ENCODE measurements at regions of chr18 and their contacts with region 1.

Region 1: DNA sequence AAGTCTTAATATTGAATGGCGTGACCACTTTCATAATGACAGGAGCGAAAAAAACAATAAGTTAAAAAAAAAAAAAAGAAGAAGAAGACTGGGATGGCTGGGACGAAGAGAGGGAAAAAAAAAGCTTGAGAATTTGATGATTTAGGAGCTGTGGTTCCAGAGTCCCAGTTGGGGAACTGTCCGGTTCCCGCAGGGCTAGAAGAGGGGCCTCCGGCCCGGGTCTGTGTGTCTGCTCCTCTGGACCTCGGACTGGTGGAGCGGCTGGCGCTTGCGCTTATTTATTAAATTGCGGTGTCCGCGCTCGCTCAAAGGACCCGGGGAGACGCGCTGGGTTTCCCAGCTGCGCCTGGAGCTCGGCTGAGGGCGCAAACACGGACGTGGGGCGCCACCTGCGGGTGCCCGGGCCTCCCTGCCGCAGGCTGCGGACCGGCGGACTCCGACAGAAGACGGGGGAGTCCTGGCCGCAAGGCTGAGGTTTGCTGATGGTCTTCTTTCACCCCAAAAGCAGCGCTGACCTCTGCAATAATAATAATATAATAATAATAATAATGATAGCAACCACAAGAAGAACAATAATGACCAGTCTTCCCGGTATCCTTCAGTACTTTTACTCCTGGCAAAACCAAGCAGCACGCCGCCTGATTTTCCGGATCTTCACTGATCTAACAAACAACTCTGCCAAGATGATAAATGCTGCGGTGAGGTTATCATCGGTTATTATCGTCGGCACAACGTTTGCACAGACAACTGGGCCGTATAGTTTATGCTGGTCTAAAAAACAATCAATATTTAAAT is at the start of gene CBLN2:
- DNase-seq: peak; percentile 64
- H3K4me3 ChIP-seq: peak within 1 kb of the TSS; percentile 24 to 58 (median 46)
- H3K27ac ChIP-seq: no peak within 1 kb of the TSS
- H3K4me1 ChIP-seq: peaks cover 16% of the 10 kb centered on the region
- H3K27me3 ChIP-seq: peaks cover 24 to 51% of the 10 kb centered on the region in 2 experiments
- CTCF ChIP-seq: peak; percentile 74 to 95
- POLR2A ChIP-seq: no peak
- total RNA-seq, gene CBLN2: 0.55 and 1.1 TPM in 2 replicates

Region 2: DNA sequence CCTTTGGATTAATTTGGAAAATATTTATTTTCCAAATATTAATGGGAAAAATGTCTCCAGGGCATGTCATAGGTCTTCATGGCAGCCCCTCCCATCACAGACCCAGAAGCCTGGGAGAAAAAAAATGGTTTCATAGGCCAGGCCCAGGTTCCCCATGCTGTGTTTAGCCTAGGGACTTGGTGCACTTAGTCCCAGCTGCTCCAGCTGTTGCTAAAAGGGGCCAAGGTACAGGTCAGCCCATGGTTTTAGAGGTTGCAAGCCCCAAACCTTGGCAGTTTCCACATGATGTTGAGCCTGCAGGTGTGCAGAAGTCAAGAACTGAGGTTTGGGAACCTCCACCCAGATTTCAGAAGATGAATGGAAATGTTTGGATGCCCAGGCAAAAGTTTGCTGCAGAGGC is 1945.9 kb before region 1 on chr18:
- CTCF ChIA-PET with region 1: interaction called, 22 read pairs
- POLR2A ChIA-PET with region 1: no interaction called
- dilution Hi-C with region 1: no loop called
- intact Hi-C with region 1: loop called (anchors 1 kb)
- DNase-seq: no peak
- H3K4me3 ChIP-seq: no peak overlapping the region
- H3K27ac ChIP-seq: no peak overlapping the region
- H3K4me1 ChIP-seq: no peaks in the 10 kb centered on the region
- H3K27me3 ChIP-seq: no peaks in the 10 kb centered on the region
- CTCF ChIP-seq: no peak
- POLR2A ChIP-seq: no peak

Region 3: GRCh38 chr18:70931942-70932814 is 1612.1 kb before region 1 on chr18:
- CTCF ChIA-PET with region 1: interaction called, 7 read pairs
- POLR2A ChIA-PET with region 1: no interaction called
- dilution Hi-C with region 1: no loop called
- intact Hi-C with region 1: loop called (anchors 2 kb)
- DNase-seq: peak; percentile 63
- H3K4me3 ChIP-seq: no peak overlapping the region
- H3K27ac ChIP-seq: no peak overlapping the region
- H3K4me1 ChIP-seq: no peaks in the 10 kb centered on the region
- H3K27me3 ChIP-seq: no peaks in the 10 kb centered on the region
- CTCF ChIP-seq: peak; percentile 45 to 49
- POLR2A ChIP-seq: no peak

Region 4: GRCh38 chr18:71398531-71398930 is 1145.8 kb before region 1 on chr18:
- CTCF ChIA-PET with region 1: interaction called, 20 read pairs
- POLR2A ChIA-PET with region 1: no interaction called
- dilution Hi-C with region 1: no loop called
- intact Hi-C with region 1: loop called (anchors 2 kb)
- DNase-seq: peak; percentile 35
- H3K4me3 ChIP-seq: no peak overlapping the region
- H3K27ac ChIP-seq: no peak overlapping the region
- H3K4me1 ChIP-seq: no peaks in the 10 kb centered on the region
- H3K27me3 ChIP-seq: no peaks in the 10 kb centered on the region
- CTCF ChIP-seq: peak; percentile 9 to 51
- POLR2A ChIP-seq: no peak

Region 5: DNA sequence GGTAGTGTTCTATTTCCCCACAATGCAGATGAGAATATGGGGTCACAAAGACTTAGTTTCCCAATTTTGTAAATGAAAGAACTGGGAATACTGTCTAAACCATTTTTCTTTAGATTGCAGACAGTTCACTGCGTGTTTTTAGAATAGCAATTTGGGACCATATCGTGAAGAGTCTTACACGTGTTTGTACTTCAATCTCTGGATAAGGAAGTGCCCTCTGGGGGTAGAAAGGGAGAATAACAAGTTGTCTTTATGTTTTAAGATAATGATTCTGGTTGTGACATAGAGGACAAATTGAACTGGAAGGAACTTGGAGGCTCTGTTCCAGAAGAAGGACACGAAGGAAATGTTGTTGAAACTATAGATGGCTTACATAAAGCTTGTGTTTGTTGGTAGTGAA is 457.9 kb before region 1 on chr18:
- CTCF ChIA-PET with region 1: no interaction called
- POLR2A ChIA-PET with region 1: no interaction called
- dilution Hi-C with region 1: no loop called
- intact Hi-C with region 1: loop called (anchors 2 kb)
- DNase-seq: peak; percentile 39
- H3K4me3 ChIP-seq: no peak overlapping the region
- H3K27ac ChIP-seq: no peak overlapping the region
- H3K4me1 ChIP-seq: no peaks in the 10 kb centered on the region
- H3K27me3 ChIP-seq: no peaks in the 10 kb centered on the region
- CTCF ChIP-seq: peak; percentile 9 to 42
- POLR2A ChIP-seq: no peak

Region 6: GRCh38 chr18:72316497-72316896 is 227.8 kb before region 1 on chr18:
- CTCF ChIA-PET with region 1: no interaction called
- POLR2A ChIA-PET with region 1: no interaction called
- dilution Hi-C with region 1: no loop called
- intact Hi-C with region 1: loop called (anchors 1 kb)
- DNase-seq: no peak
- H3K4me3 ChIP-seq: no peak overlapping the region
- H3K27ac ChIP-seq: no peak overlapping the region
- H3K4me1 ChIP-seq: no peaks in the 10 kb centered on the region
- H3K27me3 ChIP-seq: no peaks in the 10 kb centered on the region
- CTCF ChIP-seq: no peak
- POLR2A ChIP-seq: no peak

Region 7: DNA sequence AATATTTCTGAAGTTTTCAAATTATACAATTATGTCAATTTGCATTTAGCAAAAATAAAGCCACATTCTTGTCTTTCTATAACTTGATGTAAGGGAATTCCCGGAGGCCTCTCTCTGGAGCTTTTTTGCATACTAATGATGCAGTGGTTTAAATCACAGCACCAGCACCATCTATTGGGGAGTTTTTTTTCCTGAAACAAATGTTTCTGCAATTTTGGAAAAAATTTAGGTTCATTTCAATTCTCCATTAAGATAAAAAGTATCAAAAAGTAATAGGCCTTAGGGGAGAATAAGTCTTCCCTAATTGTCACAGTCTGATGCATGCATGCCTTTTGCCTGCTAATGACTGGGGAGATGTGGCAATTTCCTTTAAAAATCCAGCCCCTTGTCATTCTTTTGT is 13.7 kb before region 1 on chr18:
- CTCF ChIA-PET with region 1: interaction called, 12 read pairs
- POLR2A ChIA-PET with region 1: no interaction called
- dilution Hi-C with region 1: no loop called
- intact Hi-C with region 1: no loop called
- DNase-seq: no peak
- H3K4me3 ChIP-seq: no peak overlapping the region
- H3K27ac ChIP-seq: no peak overlapping the region
- H3K4me1 ChIP-seq: no peaks in the 10 kb centered on the region
- H3K27me3 ChIP-seq: no peaks in the 10 kb centered on the region
- CTCF ChIP-seq: no peak
- POLR2A ChIP-seq: no peak

Measured in endothelial cell of umbilical vein (primary cell).